MCF 10A (cell line): ENCODE measurements at regions of chr18 and their contacts with region 1.

Region 1: DNA sequence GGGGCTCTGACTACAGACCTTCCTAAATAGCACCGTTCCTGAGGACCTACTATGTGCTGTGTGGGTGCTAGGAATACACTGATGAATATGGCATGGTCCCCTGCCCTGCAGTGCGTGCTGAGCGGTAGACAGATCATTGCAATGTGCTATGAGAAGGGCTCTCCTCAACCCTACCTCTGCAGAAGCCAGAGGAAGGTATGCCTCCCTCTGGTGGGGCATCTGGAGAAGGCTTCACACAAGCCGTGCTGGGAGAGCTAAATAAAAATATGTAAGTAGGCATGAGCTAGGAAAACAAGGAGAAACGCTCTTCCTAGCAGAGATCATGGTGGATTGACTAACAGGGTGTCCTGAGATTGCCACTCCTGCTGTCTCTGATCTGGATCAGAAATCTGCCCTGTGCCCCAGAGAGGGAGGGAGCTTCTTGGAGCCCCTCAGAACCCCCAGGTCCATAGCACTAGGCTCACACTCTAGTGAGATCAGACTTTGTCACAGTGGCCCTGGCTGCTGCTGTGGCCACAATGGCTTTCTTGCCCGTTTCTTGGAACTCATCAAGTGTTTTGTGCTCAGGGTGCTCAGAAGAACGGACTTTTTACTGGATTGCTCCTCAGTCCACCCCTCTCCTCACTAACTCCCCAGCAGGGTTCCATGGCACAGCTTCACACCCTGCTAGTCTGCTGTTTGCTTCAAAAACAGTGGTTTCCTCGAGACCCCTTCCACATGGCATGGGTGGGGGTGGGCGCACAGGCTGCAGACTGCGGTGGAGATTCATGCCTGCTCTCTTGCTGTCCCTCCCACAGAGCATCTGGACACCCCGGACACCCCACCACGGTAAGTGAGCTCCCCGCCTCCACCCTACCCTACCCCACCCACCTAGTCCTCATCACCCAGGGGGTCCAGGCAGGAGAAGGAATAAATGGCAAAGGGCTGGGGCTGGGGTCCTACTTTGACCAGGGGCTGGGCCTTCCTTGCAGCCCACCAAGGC is 14.2 kb downstream of the SIGLEC15 start:
- DNase-seq: peak; percentile 71
- H3K4me3 Mint-ChIP-seq: no peak overlapping the region
- H3K27ac Mint-ChIP-seq: no peak overlapping the region
- H3K4me1 Mint-ChIP-seq: no peaks in the 10 kb centered on the region
- H3K27me3 Mint-ChIP-seq: peaks cover 13% of the 10 kb centered on the region
- CTCF ChIP-seq: peak; percentile 48

Region 2: GRCh38 chr18:45379903-45380302 is 459.8 kb before region 1 on chr18:
- CTCF ChIA-PET with region 1: no interaction called
- POLR2A ChIA-PET with region 1: no interaction called
- intact Hi-C with region 1: no loop called
- DNase-seq: no peak
- H3K4me3 Mint-ChIP-seq: no peak overlapping the region
- H3K27ac Mint-ChIP-seq: no peak overlapping the region
- H3K4me1 Mint-ChIP-seq: peaks cover 13% of the 10 kb centered on the region
- H3K27me3 Mint-ChIP-seq: peaks cover 19% of the 10 kb centered on the region
- CTCF ChIP-seq: no peak

Region 3: DNA sequence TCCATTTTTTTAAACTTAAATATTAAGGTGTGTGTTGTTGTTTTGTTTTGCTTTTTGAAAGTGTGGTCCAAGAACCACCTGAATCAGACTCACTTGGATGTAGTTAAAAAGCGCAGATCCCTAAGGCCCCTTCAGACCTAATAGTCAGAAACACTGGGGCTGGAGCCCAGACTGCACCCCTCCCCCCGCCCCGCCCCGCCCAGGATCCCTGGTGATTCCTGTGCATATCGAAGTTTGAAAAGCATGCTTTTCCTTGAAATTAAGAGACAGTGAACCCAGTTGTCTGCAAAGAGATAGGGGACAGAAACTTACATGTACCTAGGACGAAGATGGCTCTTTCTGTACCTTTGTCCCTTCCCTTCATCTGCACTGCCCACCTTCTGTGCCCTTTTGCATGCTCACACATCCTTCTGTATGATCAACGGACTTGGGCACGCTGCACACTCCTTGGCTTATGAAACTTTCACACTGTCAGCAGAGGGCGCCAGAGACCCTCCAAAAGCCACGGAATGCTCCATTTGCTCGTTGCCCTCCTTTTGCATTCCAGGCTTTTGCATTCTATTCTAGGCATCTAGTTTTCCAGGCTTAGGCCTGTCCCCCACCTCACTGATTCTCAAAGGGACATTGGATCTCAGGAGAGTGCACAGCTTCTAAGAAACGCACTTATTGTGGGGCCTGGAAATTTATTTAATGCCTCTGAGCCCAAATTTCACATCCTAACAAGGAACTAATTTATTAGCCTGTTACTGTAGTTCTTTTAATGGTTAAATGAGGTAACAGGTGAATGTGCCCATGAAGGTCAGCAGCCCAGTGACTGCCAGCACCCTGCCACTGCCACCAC is 148.5 kb before region 1 on chr18:
- CTCF ChIA-PET with region 1: interaction called, 7 read pairs
- POLR2A ChIA-PET with region 1: no interaction called
- intact Hi-C with region 1: loop called (anchors 1 kb)
- DNase-seq: peak; percentile 86
- H3K4me3 Mint-ChIP-seq: no peak overlapping the region
- H3K27ac Mint-ChIP-seq: no peak overlapping the region
- H3K4me1 Mint-ChIP-seq: peaks cover 10% of the 10 kb centered on the region
- H3K27me3 Mint-ChIP-seq: peaks cover 11% of the 10 kb centered on the region
- CTCF ChIP-seq: peak; percentile 90

Region 4: GRCh38 chr18:45722899-45723298 is 116.8 kb before region 1 on chr18:
- CTCF ChIA-PET with region 1: interaction called, 13 read pairs
- POLR2A ChIA-PET with region 1: no interaction called
- intact Hi-C with region 1: loop called (anchors 1 kb)
- DNase-seq: peak; percentile 80
- H3K4me3 Mint-ChIP-seq: no peak overlapping the region
- H3K27ac Mint-ChIP-seq: no peak overlapping the region
- H3K4me1 Mint-ChIP-seq: no peaks in the 10 kb centered on the region
- H3K27me3 Mint-ChIP-seq: peaks cover 11% of the 10 kb centered on the region
- CTCF ChIP-seq: peak; percentile 83

Region 5: GRCh38 chr18:45775241-45775676 is 64.4 kb before region 1 on chr18:
- CTCF ChIA-PET with region 1: no interaction called
- POLR2A ChIA-PET with region 1: no interaction called
- intact Hi-C with region 1: loop called (anchors 1 kb)
- DNase-seq: peak; percentile 80
- H3K4me3 Mint-ChIP-seq: peak overlapping the region; percentile 86
- H3K27ac Mint-ChIP-seq: peak overlapping the region; percentile 88
- H3K4me1 Mint-ChIP-seq: peaks cover 13% of the 10 kb centered on the region
- H3K27me3 Mint-ChIP-seq: peaks cover 10% of the 10 kb centered on the region
- CTCF ChIP-seq: no peak

Region 6: DNA sequence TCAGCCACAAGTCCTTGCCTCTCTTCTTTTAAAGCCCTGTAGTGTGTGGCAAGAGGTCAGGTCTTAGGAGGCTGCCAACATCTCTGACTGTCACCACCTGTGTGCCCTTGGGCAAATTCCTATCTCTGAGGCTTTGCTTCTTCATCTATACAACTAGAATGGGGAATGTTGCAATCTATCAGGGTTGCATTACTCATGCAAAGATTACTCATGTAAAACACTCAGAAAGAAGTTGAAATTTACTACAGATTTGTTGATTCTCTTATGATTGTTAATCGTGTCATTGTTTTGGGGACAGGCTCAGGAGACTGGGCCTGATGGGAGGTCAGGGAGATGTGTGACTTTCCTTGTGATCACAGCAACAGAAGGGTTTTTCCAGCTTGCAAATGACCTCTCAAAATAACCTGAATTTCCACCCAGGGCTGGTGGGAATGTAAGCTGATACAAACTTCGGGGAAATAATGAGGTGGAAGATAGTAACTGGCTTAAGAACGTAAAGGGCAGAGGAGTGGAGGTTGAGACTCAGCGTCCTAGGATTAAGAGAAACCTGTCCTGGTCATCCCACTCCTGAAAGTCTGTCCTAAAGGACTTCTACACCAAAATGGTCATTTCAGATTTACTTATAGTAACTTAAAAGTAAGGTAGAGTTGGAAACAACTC is 46.3 kb before region 1 on chr18:
- CTCF ChIA-PET with region 1: interaction called, 3 read pairs
- POLR2A ChIA-PET with region 1: no interaction called
- intact Hi-C with region 1: loop called (anchors 2 kb)
- DNase-seq: peak; percentile 99
- H3K4me3 Mint-ChIP-seq: peak overlapping the region; percentile 37
- H3K27ac Mint-ChIP-seq: peak overlapping the region; percentile 94
- H3K4me1 Mint-ChIP-seq: peaks cover 20% of the 10 kb centered on the region
- H3K27me3 Mint-ChIP-seq: no peaks in the 10 kb centered on the region
- CTCF ChIP-seq: no peak